ENCODE measurements at regions of chr11 and their contacts with region 1.

Region 1: DNA sequence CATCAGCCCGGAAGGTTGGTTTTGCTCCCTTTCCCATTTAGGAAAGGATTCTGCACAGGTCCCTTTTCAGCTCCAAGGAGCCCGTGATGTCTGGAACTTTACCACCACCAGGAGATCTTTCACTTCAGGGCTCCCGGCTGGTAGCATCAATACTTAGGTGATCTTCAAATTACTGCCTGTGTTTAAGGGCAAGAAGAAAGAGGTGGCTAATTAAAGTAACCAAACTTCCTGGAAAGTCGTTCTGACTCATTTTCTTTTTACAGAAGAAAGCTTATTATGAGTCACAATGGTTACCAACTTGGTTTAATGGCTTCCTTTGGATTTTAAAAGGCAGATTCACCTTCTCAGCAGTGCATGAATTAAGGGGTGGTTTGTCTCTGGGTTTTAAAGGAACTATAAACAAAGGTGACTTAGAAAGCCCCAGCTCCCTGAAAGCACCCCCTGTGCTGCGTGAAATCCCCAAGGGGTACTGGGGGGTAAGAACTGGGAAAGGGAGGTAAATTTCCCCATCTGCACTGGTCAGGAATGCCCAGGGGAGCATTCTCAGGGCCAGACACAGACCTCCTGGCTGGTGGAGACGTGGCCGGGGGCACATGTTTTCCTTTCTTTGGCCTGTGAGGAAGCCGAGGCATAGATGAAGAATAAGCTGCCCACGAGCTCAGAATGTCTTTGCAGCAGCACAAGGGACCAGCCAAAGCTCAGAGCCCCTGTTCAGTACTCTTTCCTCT is 8.8 kb downstream of the POU2F3 start:
- DNase-seq: peak; percentile 86
- ATAC-seq: peak; percentile 90
- H3K4me3 ChIP-seq: no peak overlapping the region
- H3K27ac ChIP-seq: no peak overlapping the region
- H3K4me1 ChIP-seq: peaks cover 16% of the 10 kb centered on the region
- H3K27me3 ChIP-seq: peaks cover 35% of the 10 kb centered on the region
- CTCF ChIP-seq: no peak

Region 2: DNA sequence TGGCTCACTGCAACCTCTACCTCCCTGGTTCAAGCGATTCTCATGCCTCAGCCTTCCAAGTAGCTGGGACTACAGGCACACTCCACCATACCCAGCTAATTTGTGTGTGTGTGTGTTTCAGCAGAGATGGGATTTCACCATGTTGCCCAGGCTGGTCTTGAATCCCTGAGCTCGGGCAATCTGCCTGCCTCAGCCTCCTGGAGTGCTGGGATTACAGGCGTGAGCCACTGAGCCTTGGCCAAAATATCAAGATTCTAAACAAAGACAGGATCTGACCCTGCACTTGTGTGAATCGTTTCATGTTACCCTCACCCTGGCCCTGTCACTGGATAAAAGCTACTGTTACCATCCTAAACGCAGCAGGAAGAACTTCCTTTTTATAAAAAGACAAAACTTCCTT is 810.1 kb before region 1 on chr11:
- CTCF ChIA-PET with region 1: no interaction called
- POLR2A ChIA-PET with region 1: interaction called, 16 read pairs
- intact Hi-C with region 1: no loop called
- DNase-seq: no peak
- ATAC-seq: no peak
- H3K4me3 ChIP-seq: no peak overlapping the region
- H3K27ac ChIP-seq: no peak overlapping the region
- H3K4me1 ChIP-seq: peaks cover 3% of the 10 kb centered on the region
- H3K27me3 ChIP-seq: no peaks in the 10 kb centered on the region
- CTCF ChIP-seq: no peak

Region 3: GRCh38 chr11:120068114-120068573 is 180.6 kb before region 1 on chr11:
- CTCF ChIA-PET with region 1: no interaction called
- POLR2A ChIA-PET with region 1: no interaction called
- intact Hi-C with region 1: no loop called
- DNase-seq: peak; percentile 42
- ATAC-seq: peak; percentile 13; the same call in 1 of the 2 replicates
- H3K4me3 ChIP-seq: no peak overlapping the region
- H3K27ac ChIP-seq: no peak overlapping the region
- H3K4me1 ChIP-seq: no peaks in the 10 kb centered on the region
- H3K27me3 ChIP-seq: peaks cover 83% of the 10 kb centered on the region
- CTCF ChIP-seq: no peak

Measured in PC-3 (cell line).